B cell (primary cell): ENCODE measurements at regions of chr12 and their contacts with region 1.

Region 1: DNA sequence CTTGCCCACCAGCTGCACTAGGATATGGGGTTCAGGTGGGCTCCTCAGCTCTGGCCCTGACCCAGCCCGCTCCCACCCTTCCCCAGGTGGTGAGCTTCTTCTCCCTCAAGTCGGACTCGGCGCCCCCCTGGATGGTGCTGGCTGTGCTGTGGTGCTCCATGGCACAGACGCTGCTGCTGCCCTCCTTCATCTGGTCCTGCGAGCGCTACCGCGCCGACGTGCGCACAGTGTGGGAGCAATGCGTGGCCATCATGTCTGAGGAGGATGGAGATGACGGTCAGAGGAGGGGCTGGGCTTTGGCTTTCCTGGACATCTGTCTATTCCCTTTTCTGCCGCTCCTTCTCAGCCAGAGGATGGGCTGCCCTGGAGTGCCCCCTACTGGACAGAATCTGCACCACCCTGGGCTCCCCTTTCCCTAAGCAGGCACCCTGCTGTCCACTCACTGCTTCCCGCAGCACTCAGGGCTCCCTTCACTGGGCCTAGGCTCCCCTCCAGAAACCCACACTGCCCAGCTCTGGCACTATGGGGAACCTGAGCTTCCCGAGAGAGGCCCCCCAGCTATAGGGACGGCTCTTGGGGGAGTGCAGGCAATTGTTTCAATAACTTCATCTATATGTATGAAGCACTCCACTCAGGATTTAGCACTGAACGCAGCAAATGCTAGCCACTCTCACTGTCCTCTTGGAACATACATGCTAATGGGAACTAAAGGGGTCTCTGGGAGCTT is 2.6 kb upstream of the P3H3 start:
- DNase-seq: peak; percentile 80
- ATAC-seq: peak; percentile 66
- H3K4me3 ChIP-seq: no peak overlapping the region
- H3K4me3 Mint-ChIP-seq: no peak overlapping the region
- H3K27ac ChIP-seq: no peak overlapping the region
- H3K27ac Mint-ChIP-seq: no peak overlapping the region
- H3K4me1 ChIP-seq: peaks cover 37 to 40% of the 10 kb centered on the region in 2 donors
- H3K4me1 Mint-ChIP-seq: peaks cover 31% of the 10 kb centered on the region
- H3K27me3 ChIP-seq: peaks cover 0 to 82% (median 41%) of the 10 kb centered on the region in 4 experiments
- H3K27me3 Mint-ChIP-seq: peaks cover 78% of the 10 kb centered on the region
- CTCF ChIP-seq: peak; percentile 86

Region 2: GRCh38 chr12:6563448-6564050 is 262.0 kb before region 1 on chr12:
- CTCF ChIA-PET with region 1: no interaction called
- POLR2A ChIA-PET with region 1: no interaction called
- intact Hi-C with region 1: loop called (anchors 2 kb)
- DNase-seq: peak; percentile 76
- ATAC-seq: peak; percentile 28
- H3K4me3 ChIP-seq: no peak overlapping the region
- H3K4me3 Mint-ChIP-seq: no peak overlapping the region
- H3K27ac ChIP-seq: no peak overlapping the region
- H3K27ac Mint-ChIP-seq: peak overlapping the region; percentile 10
- H3K4me1 ChIP-seq: peaks cover 7 to 13% of the 10 kb centered on the region in 2 donors
- H3K4me1 Mint-ChIP-seq: peaks cover 28% of the 10 kb centered on the region
- H3K27me3 ChIP-seq: no peaks in the 10 kb centered on the region
- H3K27me3 Mint-ChIP-seq: no peaks in the 10 kb centered on the region
- CTCF ChIP-seq: peak; percentile 95

Region 3: GRCh38 chr12:6735448-6736191 is 89.9 kb before region 1 on chr12:
- CTCF ChIA-PET with region 1: no interaction called
- POLR2A ChIA-PET with region 1: no interaction called
- intact Hi-C with region 1: loop called (anchors 1 kb)
- DNase-seq: peak; percentile 51
- ATAC-seq: peak; percentile 68
- H3K4me3 ChIP-seq: no peak overlapping the region
- H3K4me3 Mint-ChIP-seq: no peak overlapping the region
- H3K27ac ChIP-seq: no peak overlapping the region
- H3K27ac Mint-ChIP-seq: no peak overlapping the region
- H3K4me1 ChIP-seq: no peaks in the 10 kb centered on the region
- H3K4me1 Mint-ChIP-seq: no peaks in the 10 kb centered on the region
- H3K27me3 ChIP-seq: no peaks in the 10 kb centered on the region
- H3K27me3 Mint-ChIP-seq: no peaks in the 10 kb centered on the region
- CTCF ChIP-seq: peak; percentile 43